B cell (primary cell): ENCODE measurements at regions of chr3 and their contacts with region 1.

Region 1: DNA sequence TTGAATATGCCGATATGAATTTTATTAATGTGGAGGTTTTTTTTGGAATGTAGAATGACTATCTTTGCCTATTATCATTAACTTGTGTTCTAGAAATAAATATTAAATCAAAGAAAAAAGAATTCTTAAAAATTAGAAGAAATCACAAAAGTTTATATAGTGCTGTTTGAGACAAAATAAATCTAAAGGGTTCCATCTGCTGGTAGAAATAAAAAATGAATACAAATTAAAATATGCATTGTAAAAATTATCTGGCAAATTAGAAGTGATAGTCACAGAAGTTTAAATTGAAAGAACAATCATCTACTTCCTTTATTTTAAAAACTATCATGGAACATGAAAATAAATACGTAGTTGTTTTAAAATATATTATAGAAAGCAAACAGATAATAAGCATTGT is 22.7 kb upstream of the ZBTB20 start:
- DNase-seq: no peak
- ATAC-seq: no peak
- H3K4me3 ChIP-seq: no peak overlapping the region
- H3K4me3 Mint-ChIP-seq: no peak overlapping the region
- H3K27ac ChIP-seq: no peak overlapping the region
- H3K27ac Mint-ChIP-seq: no peak overlapping the region
- H3K4me1 ChIP-seq: no peaks in the 10 kb centered on the region
- H3K4me1 Mint-ChIP-seq: peaks cover 11% of the 10 kb centered on the region
- H3K27me3 ChIP-seq: no peaks in the 10 kb centered on the region
- H3K27me3 Mint-ChIP-seq: no peaks in the 10 kb centered on the region
- CTCF ChIP-seq: peak; percentile 69

Region 2: DNA sequence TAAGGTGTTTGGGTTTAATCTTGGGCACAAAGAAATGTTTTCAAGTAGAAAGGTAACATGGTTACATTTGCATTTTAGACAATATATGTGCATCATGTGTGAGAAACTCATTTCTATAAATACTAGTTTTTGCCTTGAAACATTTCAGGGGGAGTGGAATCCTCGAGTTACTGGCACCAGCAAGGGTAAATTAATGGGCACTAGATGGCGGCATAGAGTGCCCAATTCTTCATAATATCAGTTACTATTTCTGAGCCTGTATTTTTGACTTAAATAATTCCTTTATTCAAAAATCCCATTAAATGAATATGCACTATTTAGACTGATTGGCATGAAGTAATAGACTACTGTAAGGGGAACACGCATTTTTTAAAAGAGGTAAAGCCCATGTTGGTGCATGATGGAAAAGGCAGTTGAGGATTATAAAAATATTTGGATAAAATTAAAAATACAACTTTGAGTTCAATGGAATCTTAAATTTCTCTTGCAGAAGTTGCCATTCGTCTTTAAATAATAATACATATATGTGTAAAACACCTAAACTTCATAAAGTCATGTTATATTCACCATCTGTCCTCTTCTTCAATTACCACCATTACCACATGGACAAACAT is 129.0 kb before region 1 on chr3:
- CTCF ChIA-PET with region 1: interaction called, 13 read pairs
- POLR2A ChIA-PET with region 1: no interaction called
- intact Hi-C with region 1: loop called (anchors 1 kb)
- DNase-seq: peak; percentile 55
- ATAC-seq: peak; percentile 41
- H3K4me3 ChIP-seq: no peak overlapping the region
- H3K4me3 Mint-ChIP-seq: no peak overlapping the region
- H3K27ac ChIP-seq: no peak overlapping the region
- H3K27ac Mint-ChIP-seq: no peak overlapping the region
- H3K4me1 ChIP-seq: no peaks in the 10 kb centered on the region
- H3K4me1 Mint-ChIP-seq: no peaks in the 10 kb centered on the region
- H3K27me3 ChIP-seq: no peaks in the 10 kb centered on the region
- H3K27me3 Mint-ChIP-seq: no peaks in the 10 kb centered on the region
- CTCF ChIP-seq: peak; percentile 85

Region 3: DNA sequence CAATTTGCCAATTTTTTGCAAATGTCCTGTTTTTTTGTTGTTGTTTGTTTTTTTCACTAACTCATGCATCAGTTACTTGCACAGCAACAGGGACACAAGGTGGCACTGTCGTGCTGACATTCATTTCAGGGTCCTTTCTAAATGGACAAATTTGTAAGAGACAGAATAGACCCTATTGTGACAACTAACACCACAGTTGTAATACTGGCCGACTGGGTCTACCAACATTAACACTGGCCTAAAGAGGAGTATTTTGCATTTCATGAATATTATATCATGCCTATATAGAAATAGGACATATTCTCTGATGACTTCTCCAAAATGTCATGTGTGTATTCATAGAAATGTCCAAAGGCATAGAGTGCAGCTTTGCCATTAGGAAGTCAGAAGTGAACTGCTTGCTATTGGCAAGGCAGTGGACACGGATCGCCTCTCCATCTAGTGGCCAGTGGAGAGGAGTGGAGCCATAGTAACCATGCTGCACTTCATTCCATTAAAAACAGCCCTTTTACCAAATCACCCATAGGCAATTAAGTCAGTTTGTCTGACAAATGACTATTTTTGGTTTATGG is 77.5 kb before region 1 on chr3:
- CTCF ChIA-PET with region 1: interaction called, 89 read pairs
- POLR2A ChIA-PET with region 1: no interaction called
- intact Hi-C with region 1: loop called (anchors 1 kb)
- DNase-seq: peak; percentile 69
- ATAC-seq: peak; percentile 33
- H3K4me3 ChIP-seq: no peak overlapping the region
- H3K4me3 Mint-ChIP-seq: no peak overlapping the region
- H3K27ac ChIP-seq: no peak overlapping the region
- H3K27ac Mint-ChIP-seq: no peak overlapping the region
- H3K4me1 ChIP-seq: no peaks in the 10 kb centered on the region
- H3K4me1 Mint-ChIP-seq: peaks cover 6% of the 10 kb centered on the region
- H3K27me3 ChIP-seq: no peaks in the 10 kb centered on the region
- H3K27me3 Mint-ChIP-seq: no peaks in the 10 kb centered on the region
- CTCF ChIP-seq: peak; percentile 82

Region 4: GRCh38 chr3:115321400-115321805 is 151.6 kb after region 1 on chr3:
- CTCF ChIA-PET with region 1: no interaction called
- POLR2A ChIA-PET with region 1: no interaction called
- intact Hi-C with region 1: no loop called
- DNase-seq: no peak
- ATAC-seq: no peak
- H3K4me3 ChIP-seq: no peak overlapping the region
- H3K4me3 Mint-ChIP-seq: no peak overlapping the region
- H3K27ac ChIP-seq: no peak overlapping the region
- H3K27ac Mint-ChIP-seq: no peak overlapping the region
- H3K4me1 ChIP-seq: no peaks in the 10 kb centered on the region
- H3K4me1 Mint-ChIP-seq: no peaks in the 10 kb centered on the region
- H3K27me3 ChIP-seq: no peaks in the 10 kb centered on the region
- H3K27me3 Mint-ChIP-seq: no peaks in the 10 kb centered on the region
- CTCF ChIP-seq: no peak